WTC11 (cell line): ENCODE measurements at regions of chr1 and their contacts with region 1.

Region 1: GRCh38 chr1:117121776-117122697 is 488 bp upstream of the TRIM45 start:
- DNase-seq: peak; percentile 92
- ATAC-seq: peak; percentile 95
- H3K4me3 Mint-ChIP-seq: peak overlapping the region; percentile 80
- H3K27ac Mint-ChIP-seq: peak overlapping the region; percentile 83; the same call in 1 of the 2 replicates
- H3K4me1 Mint-ChIP-seq: peaks cover 13% of the 10 kb centered on the region
- H3K27me3 Mint-ChIP-seq: no peaks in the 10 kb centered on the region
- CTCF ChIP-seq: no peak

Region 2: GRCh38 chr1:116971258-116971860 is 150.7 kb before region 1 on chr1:
- CTCF ChIA-PET with region 1: no interaction called
- POLR2A ChIA-PET with region 1: no interaction called
- DNase-seq: no peak
- ATAC-seq: peak; percentile 60; the same call in 1 of the 2 replicates
- H3K4me3 Mint-ChIP-seq: no peak overlapping the region
- H3K27ac Mint-ChIP-seq: no peak overlapping the region
- H3K4me1 Mint-ChIP-seq: peaks cover 9% of the 10 kb centered on the region
- H3K27me3 Mint-ChIP-seq: no peaks in the 10 kb centered on the region
- CTCF ChIP-seq: no peak

Region 3: GRCh38 chr1:117059678-117060440 is 62.2 kb before region 1 on chr1 and contains the start of gene TTF2:
- CTCF ChIA-PET with region 1: interaction called, 11 read pairs
- POLR2A ChIA-PET with region 1: interaction called, 4 read pairs
- DNase-seq: peak; percentile 97
- ATAC-seq: peak; percentile 98
- H3K4me3 Mint-ChIP-seq: no peak within 1 kb of the TSS
- H3K27ac Mint-ChIP-seq: peak within 1 kb of the TSS; percentile 72
- H3K4me1 Mint-ChIP-seq: peaks cover 18% of the 10 kb centered on the region
- H3K27me3 Mint-ChIP-seq: no peaks in the 10 kb centered on the region
- CTCF ChIP-seq: no peak
- total RNA-seq, gene TTF2: 78.9 to 88.8 TPM (median 79.1 TPM) in 3 replicates

Region 4: GRCh38 chr1:117146570-117147346 is 24.7 kb after region 1 on chr1:
- CTCF ChIA-PET with region 1: no interaction called
- POLR2A ChIA-PET with region 1: no interaction called
- DNase-seq: no peak
- ATAC-seq: no peak
- H3K4me3 Mint-ChIP-seq: no peak overlapping the region
- H3K27ac Mint-ChIP-seq: no peak overlapping the region
- H3K4me1 Mint-ChIP-seq: peaks cover 17% of the 10 kb centered on the region
- H3K27me3 Mint-ChIP-seq: no peaks in the 10 kb centered on the region
- CTCF ChIP-seq: no peak